ENCODE measurements at regions of chr7 and their contacts with region 1.

Region 1: DNA sequence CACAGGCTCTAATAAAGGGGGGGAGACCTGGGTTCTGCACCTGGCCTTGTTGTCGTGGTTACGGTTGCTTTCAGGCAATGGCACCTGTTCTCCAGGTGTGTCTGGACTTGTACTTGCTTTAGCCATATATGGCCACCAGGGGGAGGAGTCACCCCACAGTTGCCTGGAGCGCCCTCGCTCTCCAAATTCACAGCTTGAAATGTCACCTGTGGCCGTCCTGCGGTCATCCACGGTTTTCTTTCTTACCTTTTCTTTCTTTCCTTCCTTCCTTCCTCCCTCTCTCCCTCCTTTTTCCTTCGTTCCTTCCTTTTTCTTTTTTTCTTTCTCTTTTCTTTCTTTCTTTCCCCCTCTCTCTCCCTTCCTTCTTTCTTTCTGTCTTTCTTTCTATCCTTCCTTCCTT is 157.2 kb upstream of the ZNF92 start:
- DNase-seq: peak; percentile 17
- ATAC-seq: peak; percentile 83
- H3K4me3 ChIP-seq: no peak overlapping the region
- H3K27ac ChIP-seq: no peak overlapping the region
- H3K4me1 ChIP-seq: no peaks in the 10 kb centered on the region
- H3K27me3 ChIP-seq: no peaks in the 10 kb centered on the region
- CTCF ChIP-seq: peak; percentile 80

Region 2: GRCh38 chr7:63867127-63867526 is 1349.3 kb before region 1 on chr7:
- CTCF ChIA-PET with region 1: no interaction called
- POLR2A ChIA-PET with region 1: no interaction called
- in situ Hi-C with region 1: no loop called
- intact Hi-C with region 1: no loop called
- DNase-seq: no peak
- ATAC-seq: no peak
- H3K4me3 ChIP-seq: no peak overlapping the region
- H3K27ac ChIP-seq: no peak overlapping the region
- H3K4me1 ChIP-seq: no peaks in the 10 kb centered on the region
- H3K27me3 ChIP-seq: no peaks in the 10 kb centered on the region
- CTCF ChIP-seq: no peak

Region 3: DNA sequence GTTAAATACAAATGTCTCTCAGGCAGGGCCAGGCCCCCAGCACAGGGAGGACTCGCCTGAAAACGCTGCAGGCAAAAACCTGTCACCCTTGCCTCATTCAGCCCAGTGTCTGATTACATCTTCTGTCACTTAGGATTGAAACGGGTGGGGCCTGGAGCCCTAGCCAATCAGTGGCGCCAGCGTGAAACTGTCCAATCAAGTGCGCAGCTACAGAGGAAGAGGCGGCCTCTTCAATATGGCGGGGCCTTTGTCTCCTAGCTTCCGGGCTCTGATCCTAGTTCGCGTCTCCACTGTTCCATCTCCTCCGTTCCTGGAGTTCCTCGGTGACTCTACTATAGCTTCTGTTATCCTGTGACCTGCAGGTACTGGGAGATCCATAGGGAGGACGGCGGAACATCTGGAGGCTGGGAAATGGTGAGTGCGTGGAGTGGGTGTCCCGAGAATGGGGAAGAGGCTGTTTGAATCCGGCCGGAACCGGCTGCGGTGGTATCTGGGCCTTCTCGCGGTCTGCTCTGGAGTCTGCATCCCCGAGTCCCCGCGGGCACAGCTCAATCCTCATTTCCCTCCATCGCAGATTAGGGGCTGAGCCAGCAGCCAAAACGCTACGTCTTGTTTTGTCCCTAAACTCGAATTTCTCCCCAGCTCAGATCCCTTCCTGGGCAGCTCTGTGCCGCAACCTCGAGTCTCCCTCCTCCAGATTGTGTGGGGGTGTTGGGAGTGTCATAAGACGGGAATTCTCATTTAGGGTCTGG is 902.5 kb before region 1 on chr7 and contains the start of gene ZNF736:
- CTCF ChIA-PET with region 1: no interaction called
- POLR2A ChIA-PET with region 1: interaction called, 10 read pairs
- in situ Hi-C with region 1: no loop called
- intact Hi-C with region 1: no loop called
- DNase-seq: peak; percentile 87
- ATAC-seq: peak; percentile 100
- H3K4me3 ChIP-seq: peak within 1 kb of the TSS; percentile 75 to 95
- H3K27ac ChIP-seq: peak within 1 kb of the TSS; percentile 91
- H3K4me1 ChIP-seq: peaks cover 4% of the 10 kb centered on the region
- H3K27me3 ChIP-seq: no peaks in the 10 kb centered on the region
- CTCF ChIP-seq: no peak
- total RNA-seq, gene ZNF736: 29.0 TPM

Region 4: GRCh38 chr7:64758164-64758563 is 458.3 kb before region 1 on chr7:
- CTCF ChIA-PET with region 1: no interaction called
- POLR2A ChIA-PET with region 1: no interaction called
- in situ Hi-C with region 1: no loop called
- intact Hi-C with region 1: no loop called
- DNase-seq: no peak
- ATAC-seq: no peak
- H3K4me3 ChIP-seq: no peak overlapping the region
- H3K27ac ChIP-seq: no peak overlapping the region
- H3K4me1 ChIP-seq: no peaks in the 10 kb centered on the region
- H3K27me3 ChIP-seq: no peaks in the 10 kb centered on the region
- CTCF ChIP-seq: no peak

Region 5: GRCh38 chr7:64951250-64951848 is 265.1 kb before region 1 on chr7:
- CTCF ChIA-PET with region 1: interaction called, 11 read pairs
- POLR2A ChIA-PET with region 1: no interaction called
- in situ Hi-C with region 1: no loop called
- intact Hi-C with region 1: no loop called
- DNase-seq: peak; percentile 30
- ATAC-seq: peak; percentile 75
- H3K4me3 ChIP-seq: no peak overlapping the region
- H3K27ac ChIP-seq: no peak overlapping the region
- H3K4me1 ChIP-seq: peaks cover 8% of the 10 kb centered on the region
- H3K27me3 ChIP-seq: peaks cover 6% of the 10 kb centered on the region
- CTCF ChIP-seq: peak; percentile 82

Region 6: DNA sequence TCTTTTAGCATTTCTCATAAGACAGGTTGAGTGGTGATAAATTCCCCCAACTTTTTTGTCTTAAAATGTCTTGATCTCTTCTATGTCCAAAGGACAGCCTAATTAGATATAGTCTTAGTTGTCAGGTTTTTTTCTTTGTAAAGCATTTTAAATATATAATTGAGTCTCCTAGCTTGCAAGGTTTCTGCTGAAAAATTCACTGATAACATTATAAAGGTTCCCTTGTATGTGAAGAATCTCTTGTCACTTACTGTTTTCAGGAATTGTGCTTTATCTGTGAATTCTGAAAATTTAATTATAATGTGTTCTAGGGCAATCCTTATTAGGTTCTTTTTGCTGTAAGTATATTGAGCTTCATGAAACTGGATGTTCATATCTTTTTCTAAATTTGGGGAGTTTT is 60.4 kb after region 1 on chr7:
- CTCF ChIA-PET with region 1: no interaction called
- POLR2A ChIA-PET with region 1: no interaction called
- in situ Hi-C with region 1: no loop called
- intact Hi-C with region 1: no loop called
- DNase-seq: no peak
- ATAC-seq: no peak
- H3K4me3 ChIP-seq: no peak overlapping the region
- H3K27ac ChIP-seq: no peak overlapping the region
- H3K4me1 ChIP-seq: no peaks in the 10 kb centered on the region
- H3K27me3 ChIP-seq: no peaks in the 10 kb centered on the region
- CTCF ChIP-seq: no peak

Region 7: DNA sequence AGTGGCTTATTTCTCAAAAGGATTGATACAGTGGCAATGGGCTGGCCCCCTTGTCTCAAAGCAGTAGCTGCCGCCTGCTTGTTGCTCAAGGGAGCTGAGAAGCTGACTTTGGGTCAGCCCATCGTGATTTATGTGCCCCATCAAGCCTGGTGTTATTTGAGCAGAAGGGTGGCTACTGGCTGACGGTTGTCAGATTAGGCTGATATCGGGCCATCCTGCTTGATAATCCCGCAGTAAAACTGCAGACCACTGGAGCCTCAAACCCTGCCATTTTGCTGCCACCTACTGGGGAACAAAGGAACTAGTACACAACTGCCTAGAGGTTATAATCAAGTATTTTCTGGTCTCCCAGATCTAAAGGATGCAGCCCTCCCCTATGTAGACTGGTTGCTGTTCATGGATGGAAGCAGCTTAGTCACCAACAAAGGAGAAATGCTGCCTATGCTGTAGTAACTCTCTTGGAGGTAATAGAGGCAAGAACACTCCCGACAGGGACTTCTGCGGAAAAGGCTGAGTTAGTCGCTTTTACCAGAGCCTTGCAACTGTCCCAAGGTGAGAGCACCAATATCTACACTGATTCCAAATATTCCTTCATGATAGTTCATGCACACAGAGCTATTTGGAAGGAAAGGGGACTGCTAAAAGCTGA is 91.3 kb after region 1 on chr7:
- CTCF ChIA-PET with region 1: interaction called, 15 read pairs
- POLR2A ChIA-PET with region 1: no interaction called
- in situ Hi-C with region 1: no loop called
- intact Hi-C with region 1: loop called (anchors 1 kb)
- DNase-seq: peak; percentile 38
- ATAC-seq: peak; percentile 92
- H3K4me3 ChIP-seq: no peak overlapping the region
- H3K27ac ChIP-seq: no peak overlapping the region
- H3K4me1 ChIP-seq: no peaks in the 10 kb centered on the region
- H3K27me3 ChIP-seq: no peaks in the 10 kb centered on the region
- CTCF ChIP-seq: peak; percentile 89

Region 8: GRCh38 chr7:65325793-65326432 is 109.5 kb after region 1 on chr7:
- CTCF ChIA-PET with region 1: interaction called, 10 read pairs
- POLR2A ChIA-PET with region 1: no interaction called
- in situ Hi-C with region 1: no loop called
- intact Hi-C with region 1: no loop called
- DNase-seq: no peak
- ATAC-seq: no peak; the same call in 1 of the 2 replicates
- H3K4me3 ChIP-seq: no peak overlapping the region
- H3K27ac ChIP-seq: no peak overlapping the region
- H3K4me1 ChIP-seq: no peaks in the 10 kb centered on the region
- H3K27me3 ChIP-seq: no peaks in the 10 kb centered on the region
- CTCF ChIP-seq: no peak